GM12878 (cell line): ENCODE measurements at regions of chr10 and their contacts with region 1.

Region 1: DNA sequence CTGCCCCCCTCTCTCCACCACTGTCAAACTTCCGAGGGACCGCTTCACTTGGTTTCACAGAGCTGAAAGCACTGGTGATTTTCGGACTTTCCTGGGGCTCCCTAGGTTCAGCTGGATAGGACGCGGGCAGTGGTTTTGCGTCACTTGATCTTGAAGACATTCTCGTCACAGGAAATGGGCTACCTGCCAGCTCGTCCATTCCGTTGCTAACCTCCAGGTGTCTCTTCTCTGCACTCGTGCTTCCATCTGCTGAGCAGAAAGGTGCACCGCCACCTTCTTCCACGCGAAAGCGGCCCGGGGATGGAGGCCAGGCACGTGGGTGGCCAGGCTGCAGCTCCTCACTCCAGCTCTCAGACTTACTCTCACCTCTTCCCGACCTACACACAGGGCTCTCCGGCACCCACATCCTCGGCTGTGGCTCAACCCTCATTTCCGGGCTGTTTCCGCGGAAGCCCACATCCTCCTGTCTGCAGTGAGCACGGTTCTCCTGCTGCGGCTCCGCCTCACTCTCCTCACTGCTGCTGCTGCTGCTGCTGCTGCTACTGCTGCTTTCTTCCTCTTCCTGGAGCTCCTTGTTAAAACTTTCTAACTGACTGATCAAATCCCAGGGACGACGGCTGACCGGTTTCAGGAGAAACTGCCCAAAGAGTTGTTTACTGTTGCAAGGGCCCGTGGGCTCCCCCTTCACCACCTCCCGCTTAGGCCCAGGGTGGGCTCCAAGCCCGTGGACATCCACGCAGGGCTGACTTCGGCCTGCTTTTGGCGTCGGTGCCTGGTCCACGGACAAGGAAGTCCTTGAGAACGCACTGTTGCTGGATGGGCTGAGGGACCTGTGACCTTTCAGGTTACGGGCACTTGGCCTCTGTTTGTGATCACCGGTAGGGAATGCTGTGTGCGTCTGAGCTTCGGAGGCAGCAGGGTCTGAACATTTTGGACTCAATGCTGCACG is 32.1 kb downstream of the JCAD start:
- DNase-seq: peak; percentile 32
- ATAC-seq: peak; percentile 91
- H3K4me3 ChIP-seq: peak overlapping the region; percentile 21; the same call in 1 of the 2 replicates
- H3K27ac ChIP-seq: no peak overlapping the region
- H3K4me1 ChIP-seq: peaks cover 14% of the 10 kb centered on the region
- H3K27me3 ChIP-seq: no peaks in the 10 kb centered on the region
- CTCF ChIP-seq: peak; percentile 10 to 31 (median 28); a peak in 3 of 6 replicates
- EP300 ChIP-seq: no peak
- POLR2A ChIP-seq: no peak
- RAD21 ChIP-seq: 0 out of 2 replicates have a peak, but pooled peaks have one; percentile 12

Region 2: GRCh38 chr10:30011396-30011795 is 15.9 kb before region 1 on chr10:
- CTCF ChIA-PET with region 1: no interaction called
- POLR2A ChIA-PET with region 1: interaction called, 12 read pairs
- RAD21 ChIA-PET with region 1: no interaction called
- SMC1A ChIA-PET with region 1: no interaction called
- in situ Hi-C with region 1: no loop called
- intact Hi-C with region 1: no loop called
- DNase-seq: no peak
- ATAC-seq: no peak
- H3K4me3 ChIP-seq: no peak overlapping the region
- H3K27ac ChIP-seq: no peak overlapping the region
- H3K4me1 ChIP-seq: no peaks in the 10 kb centered on the region
- H3K27me3 ChIP-seq: no peaks in the 10 kb centered on the region
- CTCF ChIP-seq: no peak
- EP300 ChIP-seq: no peak
- POLR2A ChIP-seq: no peak
- RAD21 ChIP-seq: no peak